ENCODE measurements at regions of chr10 and their contacts with region 1.

Region 1: DNA sequence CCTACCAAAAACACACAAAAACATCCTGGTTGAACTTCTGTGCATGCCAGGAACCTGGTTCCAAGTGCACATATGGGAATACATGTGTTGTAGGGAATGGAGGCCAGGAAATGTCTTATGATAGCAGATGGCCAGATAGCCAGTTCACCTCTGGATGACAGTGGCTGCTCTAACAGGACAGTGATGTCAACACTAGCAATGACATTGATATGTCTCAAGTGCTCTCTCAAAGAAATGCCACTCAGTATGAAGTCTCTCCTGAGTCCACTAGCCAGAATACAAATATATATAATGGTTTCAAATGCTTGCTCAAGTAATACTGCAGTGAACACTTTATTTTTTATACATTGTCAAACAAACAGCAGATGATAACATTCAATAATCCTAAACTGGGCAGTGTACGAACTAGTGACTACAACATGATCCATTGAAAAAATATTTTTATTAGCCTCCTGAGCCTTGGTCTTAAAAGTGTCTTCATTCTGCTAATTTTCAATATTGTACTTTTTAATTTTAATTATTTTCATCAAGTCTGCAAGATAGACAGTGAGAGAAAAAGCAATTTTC is 26.0 kb upstream of the PCDH15 start:
- DNase-seq: no peak
- H3K4me3 Mint-ChIP-seq: no peak overlapping the region
- H3K27ac Mint-ChIP-seq: no peak overlapping the region
- H3K4me1 Mint-ChIP-seq: no peaks in the 10 kb centered on the region
- H3K27me3 Mint-ChIP-seq: peaks cover 33% of the 10 kb centered on the region
- CTCF ChIP-seq: no peak

Region 2: GRCh38 chr10:54843085-54843646 is 16.1 kb after region 1 on chr10:
- CTCF ChIA-PET with region 1: no interaction called
- POLR2A ChIA-PET with region 1: no interaction called
- intact Hi-C with region 1: loop called (anchors 1 kb)
- DNase-seq: no peak
- H3K4me3 Mint-ChIP-seq: no peak overlapping the region
- H3K27ac Mint-ChIP-seq: no peak overlapping the region
- H3K4me1 Mint-ChIP-seq: no peaks in the 10 kb centered on the region
- H3K27me3 Mint-ChIP-seq: peaks cover 65% of the 10 kb centered on the region
- CTCF ChIP-seq: no peak

Measured in MCF 10A (cell line).